HCT116 (cell line): ENCODE measurements at regions of chr9 and their contacts with region 1.

Region 1: DNA sequence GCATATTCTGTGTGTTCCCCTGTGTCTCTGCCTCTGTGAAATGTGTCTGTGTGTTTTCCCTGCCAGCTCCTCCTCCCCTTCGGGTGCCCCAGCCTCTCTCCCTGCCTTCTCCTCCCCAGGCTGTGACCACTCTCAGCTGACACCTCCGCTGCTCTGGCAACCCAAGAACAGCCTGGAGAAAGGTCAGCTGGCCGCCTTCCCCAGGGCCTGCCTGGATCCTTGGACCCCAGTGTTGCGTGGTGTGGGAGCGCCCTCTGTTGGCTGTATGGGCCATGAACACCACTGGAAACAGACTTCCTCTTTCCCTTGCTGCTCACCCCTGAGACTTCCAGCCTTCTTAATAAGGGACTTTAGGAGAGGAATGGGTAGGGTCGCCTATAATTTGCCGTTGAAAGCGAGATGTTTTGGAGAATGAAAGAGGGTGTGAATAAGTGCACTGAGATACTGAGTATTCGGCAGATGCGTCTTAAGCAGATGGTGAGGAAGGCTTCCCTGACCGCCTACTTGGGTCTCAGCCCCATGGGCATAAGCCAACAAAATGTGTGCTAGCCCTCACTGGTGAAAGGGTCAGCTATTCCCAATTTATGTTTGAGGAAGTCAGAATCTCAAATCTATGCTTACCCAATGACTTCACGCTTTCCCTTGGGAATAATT is 114.9 kb upstream of the TRIM32 start:
- DNase-seq: peak; percentile 33
- ATAC-seq: peak; percentile 99
- H3K4me3 ChIP-seq: no peak overlapping the region
- H3K27ac ChIP-seq: no peak overlapping the region
- H3K4me1 ChIP-seq: peaks cover 2 to 5% of the 10 kb centered on the region in 2 experiments; a peak in 3 of 4 replicates
- H3K27me3 ChIP-seq: no peaks in the 10 kb centered on the region
- CTCF ChIP-seq: peak; percentile 81 to 93 (median 91)
- POLR2A ChIP-seq: no peak
- RAD21 ChIP-seq: peak; percentile 97

Region 2: DNA sequence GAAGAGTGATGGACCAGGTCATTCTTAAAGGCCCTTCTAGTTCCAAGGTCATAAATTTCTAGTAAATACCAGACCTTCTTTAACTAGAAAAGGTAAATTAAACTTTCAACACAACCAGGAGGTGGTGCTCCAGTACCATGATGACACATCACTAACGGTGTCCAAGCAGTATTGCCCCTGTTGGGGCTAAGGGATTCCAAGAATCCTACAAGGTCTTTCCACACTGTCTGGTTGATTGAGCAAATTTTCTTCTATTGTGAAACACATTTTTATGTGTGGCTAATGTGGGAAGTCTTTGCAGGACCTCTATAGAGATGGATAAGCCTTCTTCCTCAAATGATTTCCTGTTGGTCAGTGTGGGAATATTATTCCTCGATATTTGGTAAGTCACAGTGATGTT is 878.2 kb before region 1 on chr9:
- CTCF ChIA-PET with region 1: no interaction called
- POLR2A ChIA-PET with region 1: no interaction called
- RAD21 ChIA-PET with region 1: no interaction called
- intact Hi-C with region 1: loop called (anchors 2 kb)
- DNase-seq: no peak
- ATAC-seq: peak; percentile 63; the same call in 1 of the 2 replicates
- H3K4me3 ChIP-seq: no peak overlapping the region
- H3K27ac ChIP-seq: no peak overlapping the region
- H3K4me1 ChIP-seq: peaks cover 0 to 9% of the 10 kb centered on the region in 2 experiments; a peak in 1 of 4 replicates
- H3K27me3 ChIP-seq: peaks cover 23% of the 10 kb centered on the region; the same call in 1 of the 2 replicates
- CTCF ChIP-seq: peak in 2 of 3 experiments; percentile 25 to 43; a peak in 4 of 6 replicates
- POLR2A ChIP-seq: no peak
- RAD21 ChIP-seq: peak; percentile 68

Region 3: DNA sequence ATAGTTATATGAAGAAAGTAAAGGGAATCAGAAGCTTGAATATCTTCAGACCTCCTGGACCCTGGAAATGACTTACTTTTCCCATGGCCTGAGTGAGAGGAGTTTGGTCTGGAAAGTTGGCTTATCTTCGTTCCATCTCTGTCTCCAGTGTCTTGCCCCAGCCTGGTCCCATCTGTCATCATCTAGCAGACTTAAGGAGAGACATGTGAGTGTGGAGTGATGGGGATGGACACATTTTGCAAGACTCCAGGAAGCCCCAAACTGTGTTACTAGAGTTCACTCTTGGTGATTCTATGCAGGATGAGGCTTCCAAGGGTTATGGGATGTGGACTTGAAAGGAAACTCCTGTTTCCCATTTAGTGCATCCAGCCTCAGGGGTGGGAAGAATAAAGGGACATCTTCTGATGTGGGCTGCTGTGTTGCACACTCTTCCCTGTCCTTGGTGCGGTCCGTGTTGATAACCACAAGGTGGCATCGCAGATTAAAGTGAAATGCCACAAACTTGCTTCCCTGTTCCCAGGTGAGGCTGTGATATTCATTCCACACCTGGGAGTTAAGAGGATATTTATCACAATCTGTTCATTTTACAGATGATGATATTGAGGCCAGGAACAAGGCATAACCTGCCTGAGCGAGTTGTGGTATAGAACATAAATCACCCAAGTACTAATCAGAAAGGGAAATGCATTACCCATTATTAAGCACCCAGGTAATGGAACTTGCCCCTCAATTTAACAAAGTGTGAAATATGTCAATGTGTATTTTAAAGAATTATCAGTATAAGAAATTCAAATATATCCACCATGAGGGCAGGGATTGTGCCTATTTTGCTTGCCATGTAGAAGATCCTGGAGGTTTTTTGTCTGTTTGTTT is 688.5 kb before region 1 on chr9:
- CTCF ChIA-PET with region 1: interaction called, 3 read pairs
- POLR2A ChIA-PET with region 1: no interaction called
- RAD21 ChIA-PET with region 1: no interaction called
- intact Hi-C with region 1: loop called (anchors 1 kb)
- DNase-seq: peak; percentile 12
- ATAC-seq: peak; percentile 95
- H3K4me3 ChIP-seq: no peak overlapping the region
- H3K27ac ChIP-seq: no peak overlapping the region
- H3K4me1 ChIP-seq: no peaks in the 10 kb centered on the region
- H3K27me3 ChIP-seq: peaks cover 52% of the 10 kb centered on the region
- CTCF ChIP-seq: peak; percentile 69 to 74 (median 73)
- POLR2A ChIP-seq: no peak
- RAD21 ChIP-seq: peak; percentile 83

Region 4: GRCh38 chr9:116149844-116150243 is 422.4 kb before region 1 on chr9:
- CTCF ChIA-PET with region 1: interaction called, 33 read pairs
- POLR2A ChIA-PET with region 1: no interaction called
- RAD21 ChIA-PET with region 1: no interaction called
- intact Hi-C with region 1: loop called (anchors 1 kb)
- DNase-seq: peak; percentile 22
- ATAC-seq: peak; percentile 77
- H3K4me3 ChIP-seq: no peak overlapping the region
- H3K27ac ChIP-seq: no peak overlapping the region
- H3K4me1 ChIP-seq: no peaks in the 10 kb centered on the region
- H3K27me3 ChIP-seq: peaks cover 11% of the 10 kb centered on the region; the same call in 1 of the 2 replicates
- CTCF ChIP-seq: peak; percentile 49 to 81 (median 75); a peak in 5 of 6 replicates
- POLR2A ChIP-seq: no peak
- RAD21 ChIP-seq: peak; percentile 51; the same call in 1 of the 2 replicates

Region 5: DNA sequence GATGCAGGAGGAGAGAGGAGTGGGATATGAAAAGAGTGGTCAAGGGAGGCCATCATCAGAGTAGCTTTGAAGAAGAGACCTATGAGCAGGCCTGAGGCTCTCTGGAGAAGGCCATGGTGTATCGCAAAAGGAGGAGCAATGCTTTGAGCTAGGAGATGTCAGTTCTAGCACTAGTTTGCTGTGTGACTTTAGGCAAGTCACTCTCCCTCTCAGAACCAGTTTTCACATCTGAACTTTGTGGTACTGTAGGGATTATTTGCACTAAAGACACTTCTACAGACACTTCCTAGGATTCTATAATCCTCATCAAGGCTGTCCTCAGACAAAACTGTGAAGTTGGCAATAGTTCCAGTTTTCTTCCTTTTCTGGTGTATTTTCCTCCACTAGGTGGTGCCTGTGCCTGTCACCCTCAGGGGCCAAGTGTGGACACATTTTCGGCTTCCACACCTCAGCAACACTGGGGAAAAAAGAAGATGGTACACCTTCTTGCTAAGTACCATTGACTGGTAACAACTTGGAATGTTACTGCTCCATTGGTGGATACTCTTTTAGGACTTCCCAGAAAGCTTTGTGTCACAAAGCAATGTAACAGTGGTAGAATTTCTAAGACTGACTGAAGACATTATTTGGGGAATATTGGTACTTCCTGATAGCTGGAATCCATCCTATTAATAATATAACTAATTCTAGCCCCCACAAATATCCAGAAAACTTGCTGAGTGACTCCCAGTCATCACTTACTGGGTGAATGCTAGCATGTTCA is 408.7 kb before region 1 on chr9:
- CTCF ChIA-PET with region 1: interaction called, 4 read pairs
- POLR2A ChIA-PET with region 1: no interaction called
- RAD21 ChIA-PET with region 1: no interaction called
- intact Hi-C with region 1: loop called (anchors 1 kb)
- DNase-seq: no peak
- ATAC-seq: peak; percentile 57
- H3K4me3 ChIP-seq: no peak overlapping the region
- H3K27ac ChIP-seq: no peak overlapping the region
- H3K4me1 ChIP-seq: no peaks in the 10 kb centered on the region
- H3K27me3 ChIP-seq: peaks cover 36% of the 10 kb centered on the region
- CTCF ChIP-seq: peak; percentile 46 to 63 (median 60); a peak in 5 of 6 replicates
- POLR2A ChIP-seq: no peak
- RAD21 ChIP-seq: peak; percentile 65

Region 6: DNA sequence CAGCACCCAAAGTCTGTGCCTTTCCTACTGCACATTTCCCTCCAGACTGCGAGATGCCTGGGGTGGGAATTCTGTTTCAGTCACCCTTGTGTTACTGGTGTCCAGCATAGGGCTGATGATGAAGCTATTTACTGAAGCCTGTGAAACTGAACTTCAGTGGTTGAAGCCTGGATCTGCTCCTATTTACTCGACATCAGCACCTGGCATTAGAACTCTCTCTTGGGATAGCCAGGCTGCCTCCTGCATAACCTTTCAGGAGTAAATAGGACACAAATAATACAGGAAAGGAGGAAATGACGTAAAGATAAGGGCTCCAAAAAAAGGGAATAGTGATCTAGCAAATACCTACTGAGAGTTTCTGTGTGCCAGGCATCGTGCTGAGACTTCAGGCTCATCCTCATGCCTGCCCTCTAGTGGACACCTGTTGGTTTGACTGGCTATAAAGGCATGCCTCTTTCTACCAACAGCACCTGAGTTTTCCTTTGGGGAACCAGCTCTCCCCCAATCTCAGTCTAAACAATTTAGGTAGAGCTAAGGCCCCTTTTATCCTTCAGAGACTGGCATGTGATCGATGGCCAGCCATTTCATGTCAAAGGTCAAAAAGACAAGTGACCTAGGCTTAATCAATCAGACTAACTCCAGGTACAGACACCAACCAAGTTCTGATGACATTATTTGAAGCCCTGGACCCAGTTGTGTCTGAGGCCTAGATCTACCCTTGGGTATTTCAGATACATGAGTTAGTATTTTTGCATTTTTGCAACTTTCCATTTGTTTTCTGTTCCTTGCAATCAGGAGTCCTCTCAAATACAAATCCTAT is 77.2 kb before region 1 on chr9:
- CTCF ChIA-PET with region 1: interaction called, 4 read pairs
- POLR2A ChIA-PET with region 1: no interaction called
- RAD21 ChIA-PET with region 1: no interaction called
- intact Hi-C with region 1: loop called (anchors 2 kb)
- DNase-seq: peak; percentile 35
- ATAC-seq: peak; percentile 83
- H3K4me3 ChIP-seq: no peak overlapping the region
- H3K27ac ChIP-seq: no peak overlapping the region
- H3K4me1 ChIP-seq: peaks cover 7 to 29% of the 10 kb centered on the region in 2 experiments; a peak in 3 of 4 replicates
- H3K27me3 ChIP-seq: no peaks in the 10 kb centered on the region
- CTCF ChIP-seq: peak; percentile 50 to 88 (median 86)
- POLR2A ChIP-seq: no peak
- RAD21 ChIP-seq: peak; percentile 64

Region 7: GRCh38 chr9:116605904-116606341 is 33.7 kb after region 1 on chr9:
- CTCF ChIA-PET with region 1: no interaction called
- POLR2A ChIA-PET with region 1: no interaction called
- RAD21 ChIA-PET with region 1: no interaction called
- intact Hi-C with region 1: no loop called
- DNase-seq: no peak
- ATAC-seq: no peak
- H3K4me3 ChIP-seq: no peak overlapping the region
- H3K27ac ChIP-seq: no peak overlapping the region
- H3K4me1 ChIP-seq: no peaks in the 10 kb centered on the region
- H3K27me3 ChIP-seq: no peaks in the 10 kb centered on the region
- CTCF ChIP-seq: no peak
- POLR2A ChIP-seq: no peak
- RAD21 ChIP-seq: no peak

Region 8: DNA sequence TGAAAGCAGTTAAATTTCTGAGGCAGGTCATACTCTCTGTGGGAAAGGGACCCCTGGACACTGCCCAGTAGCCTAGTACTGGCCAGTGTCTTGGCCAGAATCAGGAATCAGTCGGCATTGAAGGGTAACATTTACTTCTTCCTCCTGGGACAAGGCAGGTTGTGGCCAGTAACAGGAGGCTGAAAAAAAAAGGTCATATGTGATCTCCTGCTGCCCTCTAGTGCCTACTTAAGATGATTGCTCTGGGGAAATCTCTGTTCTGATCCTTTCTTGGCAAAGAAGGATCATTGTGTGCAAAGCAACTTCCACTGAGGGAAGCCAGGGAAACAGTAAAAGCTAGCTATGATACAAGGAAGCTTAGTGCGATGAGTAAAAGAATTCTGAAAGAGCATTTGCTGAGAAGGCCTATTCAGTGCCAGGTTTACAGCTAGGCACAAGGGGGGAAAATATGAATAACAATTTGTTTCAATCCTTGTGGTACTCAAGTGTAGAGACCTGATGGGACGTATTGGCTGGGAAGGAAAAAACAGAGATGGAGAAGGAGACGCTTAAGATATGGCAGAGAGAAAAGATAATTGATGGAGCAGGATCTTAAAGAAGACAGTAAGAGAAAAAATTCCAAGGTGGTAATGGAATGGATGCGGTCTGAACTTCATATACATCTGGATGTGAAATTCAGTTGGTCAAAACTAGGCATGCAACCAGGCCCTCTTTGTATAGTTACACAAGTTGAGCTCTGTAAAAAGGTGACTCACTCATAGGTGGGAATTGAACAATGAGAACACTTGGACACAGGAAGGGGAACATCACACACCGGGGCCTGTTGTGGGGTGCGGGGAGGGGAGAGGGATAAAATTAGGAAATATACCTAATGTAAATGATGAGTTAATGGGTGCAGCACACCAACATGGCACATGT is 89.1 kb after region 1 on chr9:
- CTCF ChIA-PET with region 1: no interaction called
- POLR2A ChIA-PET with region 1: no interaction called
- RAD21 ChIA-PET with region 1: no interaction called
- intact Hi-C with region 1: loop called (anchors 5 kb)
- DNase-seq: peak; percentile 59
- ATAC-seq: peak; percentile 90
- H3K4me3 ChIP-seq: no peak overlapping the region
- H3K27ac ChIP-seq: no peak overlapping the region
- H3K4me1 ChIP-seq: no peaks in the 10 kb centered on the region; a peak in 1 of 4 replicates
- H3K27me3 ChIP-seq: no peaks in the 10 kb centered on the region
- CTCF ChIP-seq: peak; percentile 69 to 73 (median 73)
- POLR2A ChIP-seq: no peak
- RAD21 ChIP-seq: peak; percentile 79

Region 9: DNA sequence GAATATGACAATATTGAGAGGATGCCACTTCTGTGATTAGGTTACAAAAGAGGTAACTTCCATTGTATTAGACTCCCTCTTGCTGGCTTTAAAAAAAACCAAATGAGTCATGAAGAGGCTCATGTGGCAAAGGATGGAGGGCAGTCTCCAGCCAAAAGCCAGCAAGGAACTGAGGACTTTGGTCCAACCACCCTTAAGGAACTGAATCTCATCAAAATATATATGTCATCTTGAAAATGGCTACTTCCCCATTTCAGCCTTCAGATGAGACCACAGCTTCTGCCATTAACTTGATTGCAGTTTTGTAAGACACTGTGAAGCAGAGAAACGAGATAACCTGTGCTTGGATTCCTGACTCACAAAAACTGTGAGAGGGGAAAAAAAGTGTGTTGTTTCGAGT is 99.4 kb after region 1 on chr9:
- CTCF ChIA-PET with region 1: no interaction called
- POLR2A ChIA-PET with region 1: no interaction called
- RAD21 ChIA-PET with region 1: no interaction called
- intact Hi-C with region 1: no loop called
- DNase-seq: no peak
- ATAC-seq: no peak
- H3K4me3 ChIP-seq: no peak overlapping the region
- H3K27ac ChIP-seq: no peak overlapping the region
- H3K4me1 ChIP-seq: no peaks in the 10 kb centered on the region
- H3K27me3 ChIP-seq: no peaks in the 10 kb centered on the region
- CTCF ChIP-seq: no peak
- POLR2A ChIP-seq: no peak
- RAD21 ChIP-seq: no peak